ENCODE measurements at regions of chr20 and their contacts with region 1.

Region 1: DNA sequence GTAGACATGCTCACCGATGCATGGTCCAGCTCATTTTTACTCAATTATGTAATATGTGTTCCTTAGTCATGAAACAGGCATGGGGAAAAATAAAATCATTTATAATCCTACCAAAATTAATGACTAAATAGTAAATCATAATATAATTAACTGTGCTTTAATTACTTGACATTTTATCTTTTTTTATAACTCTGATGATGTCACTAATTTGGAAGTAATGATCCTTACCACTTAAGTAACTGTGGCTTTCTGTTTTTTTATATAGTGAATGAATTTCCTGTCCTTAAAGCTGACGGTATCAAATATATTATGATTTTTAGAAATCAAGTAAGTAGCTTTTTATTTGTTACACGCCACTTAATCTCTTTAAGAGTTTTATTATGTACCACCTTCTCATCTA is 32.2 kb downstream of the CSE1L start:
- DNase-seq: no peak
- ATAC-seq: no peak

Region 2: DNA sequence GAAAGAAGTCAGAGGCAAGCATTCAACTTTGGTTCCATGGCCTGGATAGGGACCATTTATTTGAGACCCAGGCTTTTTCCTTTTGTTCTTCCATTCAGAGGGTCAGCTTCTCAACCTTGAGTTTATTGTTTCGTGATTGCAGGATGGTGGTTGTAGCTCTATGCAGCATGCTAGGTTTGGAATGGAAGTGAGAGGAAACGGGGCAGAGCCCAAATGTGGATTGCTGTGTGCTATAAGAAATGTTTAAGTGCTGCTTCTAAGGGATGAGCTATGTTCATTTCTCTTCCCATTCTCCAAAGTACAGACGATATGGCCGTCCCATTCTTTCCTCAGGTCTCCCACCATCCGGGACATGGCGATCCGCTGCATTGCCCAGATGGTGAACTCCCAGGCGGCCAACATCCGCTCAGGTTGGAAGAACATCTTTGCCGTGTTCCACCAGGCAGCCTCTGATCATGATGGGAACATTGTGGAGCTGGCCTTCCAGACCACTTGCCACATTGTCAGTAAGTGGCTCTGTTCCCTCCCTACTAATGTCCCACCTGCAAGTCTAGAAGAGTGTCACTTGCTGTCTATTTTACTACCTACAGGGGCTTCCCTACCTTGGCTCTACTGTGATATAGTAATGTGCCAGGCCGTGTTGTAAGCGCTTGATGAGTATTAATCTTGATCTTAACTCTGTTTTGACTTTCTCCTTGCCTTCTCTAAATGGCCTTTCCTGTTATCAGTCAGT is 68.2 kb before region 1 on chr20:
- intact Hi-C with region 1: loop called (anchors 2 kb)
- DNase-seq: no peak
- ATAC-seq: no peak

Region 3: GRCh38 chr20:51001758-51002157 is 1923.5 kb after region 1 on chr20:
- intact Hi-C with region 1: no loop called
- DNase-seq: no peak
- ATAC-seq: no peak